Colonic mucosa (tissue), 4 donors: ENCODE measurements at regions of chr12 and their contacts with region 1.

Region 1: DNA sequence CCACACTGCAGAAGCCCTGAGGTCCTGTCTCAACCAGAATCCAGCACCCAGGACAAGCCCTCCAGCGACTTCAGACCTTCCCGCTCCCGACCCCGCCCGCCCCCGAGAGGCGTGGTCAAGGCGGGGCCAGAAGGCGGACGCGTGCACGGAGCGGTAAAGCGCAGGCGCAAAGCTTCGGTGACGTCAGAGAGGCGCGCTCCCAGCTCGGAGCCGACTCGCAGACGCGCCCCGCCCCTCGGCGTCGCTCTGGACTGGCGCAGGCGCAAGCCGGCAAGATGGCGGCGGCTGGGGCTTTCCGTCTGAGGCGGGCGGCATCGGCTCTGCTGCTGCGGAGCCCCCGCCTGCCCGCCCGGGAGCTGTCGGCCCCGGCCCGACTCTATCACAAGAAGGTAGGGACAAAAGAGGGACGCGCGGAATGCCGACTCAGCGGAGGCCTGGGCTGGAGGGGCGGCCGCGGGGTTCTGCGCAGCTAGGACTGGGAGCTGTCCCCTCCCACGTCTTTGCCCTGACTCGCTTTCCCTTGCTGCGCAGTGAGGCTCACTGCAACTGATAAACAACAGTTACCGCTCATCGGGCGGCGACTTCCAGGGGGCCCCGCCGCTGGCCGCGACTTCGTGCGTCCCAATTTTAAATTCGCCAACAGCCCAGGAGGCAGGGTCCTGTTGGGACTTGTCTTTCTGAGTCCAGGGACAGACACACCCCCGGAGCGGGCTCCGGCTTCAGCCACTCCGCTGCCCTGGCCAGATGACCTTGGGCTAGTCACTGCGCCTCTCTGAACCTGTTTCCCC is at the start of gene ISCU:
- DNase-seq: peak; percentile 99
- H3K4me3 ChIP-seq: peak within 1 kb of the TSS; percentile 86
- H3K27ac ChIP-seq: peak within 1 kb of the TSS; percentile 89
- H3K4me1 ChIP-seq: peaks cover 14% of the 10 kb centered on the region
- H3K27me3 ChIP-seq: no peaks in the 10 kb centered on the region
- CTCF ChIP-seq: no peak
- total RNA-seq, gene ISCU: 93.7 to 97.5 TPM

Region 2: GRCh38 chr12:108618079-108618952 is 55.8 kb after region 1 on chr12:
- intact Hi-C with region 1: loop called (anchors 2 kb)
- DNase-seq: peak; percentile 81
- H3K4me3 ChIP-seq: no peak overlapping the region
- H3K27ac ChIP-seq: peak overlapping the region; percentile 6
- H3K4me1 ChIP-seq: peaks cover 7% of the 10 kb centered on the region
- H3K27me3 ChIP-seq: no peaks in the 10 kb centered on the region
- CTCF ChIP-seq: peak; percentile 99

Region 3: GRCh38 chr12:108803428-108804105 is 241.0 kb after region 1 on chr12:
- intact Hi-C with region 1: loop called (anchors 10 kb)
- DNase-seq: peak; percentile 85
- H3K4me3 ChIP-seq: no peak overlapping the region
- H3K27ac ChIP-seq: peak overlapping the region; percentile 69
- H3K4me1 ChIP-seq: no peaks in the 10 kb centered on the region
- H3K27me3 ChIP-seq: no peaks in the 10 kb centered on the region
- CTCF ChIP-seq: peak; percentile 87

Region 4: GRCh38 chr12:108950991-108951739 is 388.6 kb after region 1 on chr12:
- intact Hi-C with region 1: loop called (anchors 10 kb)
- DNase-seq: peak; percentile 76
- H3K4me3 ChIP-seq: no peak overlapping the region
- H3K27ac ChIP-seq: no peak overlapping the region
- H3K4me1 ChIP-seq: no peaks in the 10 kb centered on the region
- H3K27me3 ChIP-seq: no peaks in the 10 kb centered on the region
- CTCF ChIP-seq: peak; percentile 91